ENCODE measurements at regions of chr4 and their contacts with region 1.

Region 1: DNA sequence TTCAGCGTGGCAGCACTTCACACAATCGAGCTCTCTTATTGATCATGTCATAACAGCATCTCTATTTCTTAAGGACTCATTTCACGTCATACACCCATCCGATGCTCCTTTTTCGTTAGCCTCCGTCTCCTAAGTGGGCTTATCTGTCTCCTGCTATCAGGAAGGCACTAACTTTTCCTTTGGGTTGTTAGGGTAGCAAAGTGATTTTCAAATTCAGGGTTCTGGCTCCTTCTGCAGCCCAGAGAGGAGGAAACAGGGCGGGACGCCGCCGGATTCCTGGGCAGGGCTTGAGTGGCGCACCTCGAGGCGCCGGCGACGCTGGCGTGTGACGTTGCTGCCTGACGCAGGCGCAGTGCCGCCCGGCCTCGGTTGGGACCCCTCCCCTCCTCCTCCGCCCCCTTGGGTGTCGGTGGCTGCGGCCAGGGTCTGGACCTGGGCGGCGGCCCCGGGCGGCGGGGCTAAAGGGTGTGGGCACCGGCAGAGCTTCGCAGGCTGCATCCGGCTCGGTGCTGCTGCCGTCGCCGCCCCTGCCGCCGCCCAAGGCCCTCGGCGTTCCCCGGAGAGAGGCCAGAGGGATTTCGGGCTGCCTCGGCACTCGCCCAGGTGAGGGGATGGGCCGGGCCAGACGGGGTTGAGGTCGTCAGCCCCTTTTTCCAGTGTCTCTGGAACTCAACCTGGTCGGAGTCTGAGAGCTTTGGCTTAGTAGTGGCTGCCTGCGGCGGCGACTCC is at the start of gene BLTP1:
- DNase-seq: peak; percentile 81 to 92 (median 87)
- ATAC-seq: peak; percentile 95
- H3K4me3 ChIP-seq: peak within 1 kb of the TSS; percentile 96
- H3K4me3 Mint-ChIP-seq: peak within 1 kb of the TSS; percentile 79 to 98 (median 98)
- H3K27ac ChIP-seq: peak within 1 kb of the TSS; percentile 85
- H3K27ac Mint-ChIP-seq: peak within 1 kb of the TSS; percentile 90 to 100 (median 97)
- H3K4me1 ChIP-seq: peaks cover 22 to 28% of the 10 kb centered on the region in 2 donors
- H3K4me1 Mint-ChIP-seq: peaks cover 41 to 84% (median 72%) of the 10 kb centered on the region in 7 donors
- H3K27me3 ChIP-seq: no peaks in the 10 kb centered on the region
- H3K27me3 Mint-ChIP-seq: no peaks in the 10 kb centered on the region
- total RNA-seq, gene BLTP1: 45.9 to 86.6 (median 72.8) TPM

Region 2: GRCh38 chr4:121526509-121526908 is 625.6 kb before region 1 on chr4:
- CTCF ChIA-PET with region 1: no interaction called
- POLR2A ChIA-PET with region 1: no interaction called
- intact Hi-C with region 1: no loop called
- DNase-seq: no peak
- ATAC-seq: no peak
- H3K4me3 ChIP-seq: no peak overlapping the region
- H3K4me3 Mint-ChIP-seq: no peak overlapping the region
- H3K27ac ChIP-seq: no peak overlapping the region
- H3K27ac Mint-ChIP-seq: no peak overlapping the region
- H3K4me1 ChIP-seq: no peaks in the 10 kb centered on the region
- H3K4me1 Mint-ChIP-seq: no peaks in the 10 kb centered on the region
- H3K27me3 ChIP-seq: no peaks in the 10 kb centered on the region
- H3K27me3 Mint-ChIP-seq: peaks cover 12 to 44% (median 23%) of the 10 kb centered on the region in 5 donors

Region 3: GRCh38 chr4:121823505-121824170 is 328.5 kb before region 1 on chr4 and contains the start of gene CCNA2:
- CTCF ChIA-PET with region 1: no interaction called
- POLR2A ChIA-PET with region 1: no interaction called
- intact Hi-C with region 1: loop called (anchors 1 to 2 kb)
- DNase-seq: peak; percentile 86 to 95 (median 93)
- ATAC-seq: peak; percentile 99
- H3K4me3 ChIP-seq: peak within 1 kb of the TSS; percentile 85
- H3K4me3 Mint-ChIP-seq: peak within 1 kb of the TSS; percentile 85 to 100 (median 92)
- H3K27ac ChIP-seq: peak within 1 kb of the TSS; percentile 60
- H3K27ac Mint-ChIP-seq: peak within 1 kb of the TSS; percentile 72 to 97 (median 93)
- H3K4me1 ChIP-seq: peaks cover 0 to 9% of the 10 kb centered on the region in 2 donors
- H3K4me1 Mint-ChIP-seq: peaks cover 4 to 44% (median 12%) of the 10 kb centered on the region in 7 donors
- H3K27me3 ChIP-seq: no peaks in the 10 kb centered on the region
- H3K27me3 Mint-ChIP-seq: peaks cover 0 to 3% (median 0%) of the 10 kb centered on the region in 5 donors
- total RNA-seq, gene CCNA2: 0.24 to 63.7 (median 1.2) TPM

Region 4: DNA sequence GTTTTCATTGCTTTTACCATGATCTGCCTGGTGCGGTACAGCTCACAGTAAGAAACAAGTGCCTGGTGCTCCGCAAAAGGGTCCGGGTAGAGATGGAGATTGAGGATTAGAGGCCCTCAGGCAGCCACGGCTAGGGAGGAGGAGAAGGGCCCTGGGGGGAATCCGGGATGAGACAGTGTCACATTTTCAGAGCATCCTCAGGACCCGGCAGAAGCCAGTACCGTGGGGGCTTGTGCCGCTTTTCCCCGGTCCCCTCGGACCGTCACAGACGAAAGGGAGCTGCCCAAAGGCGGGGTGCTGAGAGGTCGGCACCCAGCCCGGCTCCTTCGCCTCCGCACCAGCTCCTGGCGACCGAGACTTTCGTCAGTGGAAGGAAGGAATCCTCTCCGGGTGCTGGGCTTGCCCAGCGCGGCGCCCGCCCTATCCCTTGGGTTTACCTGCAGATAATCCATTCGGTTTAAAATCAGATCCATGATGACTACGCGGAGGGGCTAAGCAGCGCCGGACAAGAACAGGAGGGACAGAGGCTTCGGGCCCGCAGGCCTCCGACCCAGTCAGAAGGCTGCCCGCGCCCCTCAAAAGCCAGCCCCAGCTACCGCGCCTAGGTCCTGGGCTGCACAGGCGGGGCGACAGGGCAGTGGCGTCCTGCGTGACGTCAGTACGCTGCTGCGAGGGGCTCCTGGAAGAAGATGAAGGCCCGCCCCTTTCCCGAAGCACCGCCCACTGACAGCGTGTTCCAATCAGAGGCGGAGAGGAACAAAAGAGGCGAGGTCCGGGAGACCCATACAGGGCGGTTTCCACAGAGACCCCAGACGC is 282.1 kb before region 1 on chr4 and contains the start of gene BBS7:
- CTCF ChIA-PET with region 1: no interaction called
- POLR2A ChIA-PET with region 1: no interaction called
- intact Hi-C with region 1: loop called (anchors 1 kb)
- DNase-seq: peak; percentile 79 to 93 (median 89)
- ATAC-seq: peak; percentile 98
- H3K4me3 ChIP-seq: peak within 1 kb of the TSS; percentile 99
- H3K4me3 Mint-ChIP-seq: peak within 1 kb of the TSS; percentile 88 to 98 (median 97)
- H3K27ac ChIP-seq: peak within 1 kb of the TSS; percentile 77
- H3K27ac Mint-ChIP-seq: peak within 1 kb of the TSS; percentile 69 to 95 (median 90)
- H3K4me1 ChIP-seq: peaks cover 0 to 10% of the 10 kb centered on the region in 2 donors
- H3K4me1 Mint-ChIP-seq: peaks cover 9 to 17% (median 15%) of the 10 kb centered on the region in 7 donors
- H3K27me3 ChIP-seq: no peaks in the 10 kb centered on the region
- H3K27me3 Mint-ChIP-seq: peaks cover 0 to 30% (median 12%) of the 10 kb centered on the region in 5 donors
- total RNA-seq, gene BBS7: 3.7 to 13.1 (median 8.1) TPM

Region 5: GRCh38 chr4:122044496-122044895 is 107.7 kb before region 1 on chr4:
- CTCF ChIA-PET with region 1: no interaction called
- POLR2A ChIA-PET with region 1: no interaction called
- intact Hi-C with region 1: loop called in 1 of 2 experiments (anchors 5 kb)
- DNase-seq: no peak
- ATAC-seq: no peak
- H3K4me3 ChIP-seq: no peak overlapping the region
- H3K4me3 Mint-ChIP-seq: no peak overlapping the region
- H3K27ac ChIP-seq: no peak overlapping the region
- H3K27ac Mint-ChIP-seq: no peak overlapping the region
- H3K4me1 ChIP-seq: no peaks in the 10 kb centered on the region
- H3K4me1 Mint-ChIP-seq: no peaks in the 10 kb centered on the region
- H3K27me3 ChIP-seq: peaks cover 0 to 2% of the 10 kb centered on the region in 2 donors
- H3K27me3 Mint-ChIP-seq: peaks cover 5 to 27% (median 12%) of the 10 kb centered on the region in 5 donors

Region 6: DNA sequence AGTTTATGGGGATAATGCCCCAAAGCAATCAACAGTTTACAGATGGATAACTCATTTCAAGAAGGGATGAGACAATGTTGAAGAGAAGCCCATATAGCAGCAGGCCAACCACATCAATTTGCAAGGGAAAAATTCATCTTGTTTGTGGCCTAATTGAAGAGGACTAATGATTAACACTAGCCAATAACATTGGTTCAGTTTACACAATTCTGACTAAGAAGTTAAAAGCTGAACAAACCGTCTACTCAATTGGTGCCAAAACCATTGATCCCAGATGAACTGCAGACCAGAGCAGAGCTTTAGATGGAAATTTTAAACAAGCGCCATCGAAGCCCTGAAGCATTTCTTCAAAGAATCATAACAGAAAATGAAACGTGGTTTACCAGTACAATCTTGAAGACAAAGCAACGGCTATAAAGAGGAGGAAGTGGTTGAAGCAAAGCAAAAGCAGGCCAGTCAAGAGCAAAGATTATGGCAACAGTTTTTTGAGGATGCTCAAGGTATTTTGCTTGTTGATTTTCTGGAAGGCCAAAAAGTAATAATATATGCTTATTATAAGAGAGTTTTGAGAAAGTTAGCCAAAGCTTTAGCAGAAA is 20.5 kb before region 1 on chr4:
- CTCF ChIA-PET with region 1: interaction called, 3 read pairs
- POLR2A ChIA-PET with region 1: interaction called, 19 read pairs
- intact Hi-C with region 1: loop called (anchors 1 kb)
- DNase-seq: peak in 6 of 9 donors; percentile 37 to 64 (median 58)
- ATAC-seq: peak; percentile 69
- H3K4me3 ChIP-seq: peak overlapping the region; percentile 25
- H3K4me3 Mint-ChIP-seq: peak overlapping the region in 9 of 10 donors; percentile 15 to 60 (median 44)
- H3K27ac ChIP-seq: peak overlapping the region; percentile 46
- H3K27ac Mint-ChIP-seq: peak overlapping the region; percentile 50 to 97 (median 85)
- H3K4me1 ChIP-seq: peaks cover 10 to 14% of the 10 kb centered on the region in 2 donors
- H3K4me1 Mint-ChIP-seq: peaks cover 10 to 34% (median 24%) of the 10 kb centered on the region in 7 donors
- H3K27me3 ChIP-seq: no peaks in the 10 kb centered on the region
- H3K27me3 Mint-ChIP-seq: no peaks in the 10 kb centered on the region